Testis (tissue), 5 donors: ENCODE measurements at regions of chr1 and their contacts with region 1.

Region 1: GRCh38 chr1:108121358-108122143 is 78.6 kb downstream of the SLC25A24 start:
- DNase-seq: peak; percentile 33
- H3K4me3 ChIP-seq: peak overlapping the region in 1 of 2 donors; percentile 8
- H3K27ac ChIP-seq: no peak overlapping the region
- H3K4me1 ChIP-seq: no peaks in the 10 kb centered on the region
- H3K27me3 ChIP-seq: no peaks in the 10 kb centered on the region
- CTCF ChIP-seq: no peak
- POLR2A ChIP-seq: no peak

Region 2: DNA sequence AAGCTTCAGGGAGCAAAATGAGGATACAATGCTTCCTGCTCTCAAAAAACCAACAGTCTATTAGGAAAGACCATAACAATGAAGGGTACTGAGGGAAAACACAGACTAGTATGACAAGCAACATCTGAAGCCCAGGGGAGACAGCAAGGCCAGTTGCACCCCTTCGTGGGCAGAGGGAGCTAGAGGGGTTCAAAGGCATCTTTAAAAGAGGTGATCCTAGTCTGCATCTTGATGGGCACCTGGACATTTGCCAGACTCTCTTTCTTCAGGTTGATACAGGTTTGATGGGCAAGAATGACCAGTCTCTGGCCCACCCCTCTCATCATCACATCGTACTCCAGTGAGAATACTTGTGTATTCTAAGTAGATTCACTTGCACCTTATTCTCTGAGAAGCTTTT is 334.3 kb before region 1 on chr1:
- intact Hi-C with region 1: loop called (anchors 5 kb)
- DNase-seq: no peak
- H3K4me3 ChIP-seq: no peak overlapping the region
- H3K27ac ChIP-seq: no peak overlapping the region
- H3K4me1 ChIP-seq: no peaks in the 10 kb centered on the region
- H3K27me3 ChIP-seq: no peaks in the 10 kb centered on the region
- CTCF ChIP-seq: no peak
- POLR2A ChIP-seq: no peak

Region 3: GRCh38 chr1:107935396-107936064 is 186.0 kb before region 1 on chr1:
- intact Hi-C with region 1: no loop called
- DNase-seq: no peak
- H3K4me3 ChIP-seq: no peak overlapping the region
- H3K27ac ChIP-seq: no peak overlapping the region
- H3K4me1 ChIP-seq: no peaks in the 10 kb centered on the region
- H3K27me3 ChIP-seq: no peaks in the 10 kb centered on the region
- CTCF ChIP-seq: no peak
- POLR2A ChIP-seq: no peak

Region 4: DNA sequence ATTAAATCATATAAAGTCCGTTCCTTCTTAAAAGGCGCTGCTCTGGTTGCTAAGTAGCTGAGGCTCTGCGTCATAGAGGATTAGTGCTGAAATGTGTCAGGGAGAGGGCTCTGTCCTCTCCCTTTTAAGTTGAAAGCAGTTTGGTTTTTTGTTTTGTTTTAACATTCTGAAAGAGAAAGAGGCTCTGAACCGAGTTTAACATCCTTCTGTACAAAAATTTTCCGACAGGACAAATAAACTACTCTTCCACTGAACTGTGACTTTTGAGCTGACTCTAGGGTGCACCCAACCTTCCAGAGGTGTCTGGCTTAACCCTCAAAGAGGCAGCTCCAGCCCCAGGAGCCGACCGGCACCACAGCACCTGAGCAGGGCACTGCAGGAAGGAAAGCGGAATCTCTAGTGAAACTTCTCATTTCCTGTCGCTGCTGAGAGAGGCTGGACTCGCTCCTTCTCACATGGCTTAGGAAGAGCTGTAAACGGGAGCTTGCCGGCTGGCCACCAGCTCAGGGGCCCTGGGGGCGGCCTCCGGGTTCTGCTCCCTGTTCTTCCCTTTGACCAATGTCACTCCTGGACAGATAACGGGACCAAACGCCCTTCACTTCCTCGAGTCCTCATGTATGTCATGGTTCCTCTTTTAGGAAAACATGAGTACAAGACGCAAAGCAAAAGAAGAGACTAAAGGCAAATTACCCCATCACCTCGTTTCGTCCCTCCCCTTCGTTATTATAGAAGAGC is 157.8 kb before region 1 on chr1:
- intact Hi-C with region 1: no loop called
- DNase-seq: peak; percentile 19
- H3K4me3 ChIP-seq: peak overlapping the region; percentile 45 to 57
- H3K27ac ChIP-seq: peak overlapping the region in 1 of 2 donors; percentile 29
- H3K4me1 ChIP-seq: peaks cover 4% of the 10 kb centered on the region
- H3K27me3 ChIP-seq: no peaks in the 10 kb centered on the region
- CTCF ChIP-seq: no peak
- POLR2A ChIP-seq: no peak

Region 5: DNA sequence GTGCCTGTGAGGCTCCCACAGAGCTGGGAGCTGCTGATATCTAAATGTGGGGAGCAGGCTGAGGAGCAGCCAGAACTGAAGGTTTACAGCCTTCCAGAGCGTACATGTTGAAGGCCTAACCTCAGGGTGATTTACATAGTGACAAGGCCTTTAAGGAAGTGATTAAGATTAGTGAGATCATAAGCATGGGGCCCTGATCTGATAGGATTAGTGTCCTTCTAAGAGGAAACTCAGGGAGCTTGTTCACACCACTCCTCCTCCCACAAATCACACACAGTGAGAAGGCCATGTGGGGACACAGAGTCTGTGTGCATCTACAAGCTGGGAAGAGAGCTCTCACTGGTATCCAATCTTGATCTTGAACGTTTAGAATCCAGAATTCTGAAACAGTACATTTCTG is 236.3 kb after region 1 on chr1:
- intact Hi-C with region 1: no loop called
- DNase-seq: no peak
- H3K4me3 ChIP-seq: no peak overlapping the region
- H3K27ac ChIP-seq: no peak overlapping the region
- H3K4me1 ChIP-seq: no peaks in the 10 kb centered on the region
- H3K27me3 ChIP-seq: no peaks in the 10 kb centered on the region
- CTCF ChIP-seq: no peak
- POLR2A ChIP-seq: no peak